ENCODE measurements at regions of chr16 and their contacts with region 1.

Region 1: GRCh38 chr16:53822936-53823529 is 119.1 kb downstream of the FTO start:
- DNase-seq: no peak
- H3K4me3 ChIP-seq: no peak overlapping the region
- H3K27ac ChIP-seq: peak overlapping the region; percentile 55
- H3K4me1 ChIP-seq: peaks cover 27% of the 10 kb centered on the region
- H3K27me3 ChIP-seq: no peaks in the 10 kb centered on the region
- CTCF ChIP-seq: no peak

Region 2: GRCh38 chr16:53374800-53375199 is 448.2 kb before region 1 on chr16:
- CTCF ChIA-PET with region 1: no interaction called
- POLR2A ChIA-PET with region 1: no interaction called
- intact Hi-C with region 1: no loop called
- DNase-seq: no peak
- H3K4me3 ChIP-seq: peak overlapping the region; percentile 69; the same call in 1 of the 2 replicates
- H3K27ac ChIP-seq: no peak overlapping the region
- H3K4me1 ChIP-seq: peaks cover 17% of the 10 kb centered on the region
- H3K27me3 ChIP-seq: 0 out of 2 replicates have a peak, but pooled peaks cover 4% of the 10 kb centered on the region
- CTCF ChIP-seq: no peak

Region 3: DNA sequence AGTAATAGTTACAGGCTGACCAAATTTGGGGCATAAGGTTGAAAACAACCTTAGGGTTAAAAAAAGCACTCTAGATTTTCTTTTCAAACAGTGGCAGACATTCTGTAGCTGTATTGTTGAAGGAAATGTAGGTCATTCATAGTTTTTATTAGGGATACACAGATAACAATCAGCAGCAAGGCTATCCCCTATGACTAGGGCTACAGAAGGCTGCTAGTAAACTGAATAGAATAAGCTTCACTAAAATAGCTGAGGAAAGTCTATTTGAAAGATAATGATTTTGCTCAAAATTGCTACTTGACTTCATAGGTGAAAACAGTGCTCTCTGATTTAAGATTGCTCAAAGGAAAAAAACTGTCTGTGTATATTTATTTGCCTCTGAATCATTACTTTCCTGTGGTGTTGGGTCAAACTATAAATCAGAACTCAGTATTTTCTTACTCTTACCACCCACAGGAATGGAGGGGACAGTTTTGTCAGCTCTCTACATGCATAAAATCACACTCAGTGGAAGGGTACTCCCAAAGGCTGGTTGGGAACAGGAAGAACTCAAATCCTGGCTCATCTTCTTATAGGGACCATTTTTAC is 144.2 kb before region 1 on chr16:
- CTCF ChIA-PET with region 1: no interaction called
- POLR2A ChIA-PET with region 1: no interaction called
- intact Hi-C with region 1: no loop called
- DNase-seq: no peak
- H3K4me3 ChIP-seq: no peak overlapping the region
- H3K27ac ChIP-seq: no peak overlapping the region
- H3K4me1 ChIP-seq: no peaks in the 10 kb centered on the region
- H3K27me3 ChIP-seq: no peaks in the 10 kb centered on the region
- CTCF ChIP-seq: no peak

Region 4: DNA sequence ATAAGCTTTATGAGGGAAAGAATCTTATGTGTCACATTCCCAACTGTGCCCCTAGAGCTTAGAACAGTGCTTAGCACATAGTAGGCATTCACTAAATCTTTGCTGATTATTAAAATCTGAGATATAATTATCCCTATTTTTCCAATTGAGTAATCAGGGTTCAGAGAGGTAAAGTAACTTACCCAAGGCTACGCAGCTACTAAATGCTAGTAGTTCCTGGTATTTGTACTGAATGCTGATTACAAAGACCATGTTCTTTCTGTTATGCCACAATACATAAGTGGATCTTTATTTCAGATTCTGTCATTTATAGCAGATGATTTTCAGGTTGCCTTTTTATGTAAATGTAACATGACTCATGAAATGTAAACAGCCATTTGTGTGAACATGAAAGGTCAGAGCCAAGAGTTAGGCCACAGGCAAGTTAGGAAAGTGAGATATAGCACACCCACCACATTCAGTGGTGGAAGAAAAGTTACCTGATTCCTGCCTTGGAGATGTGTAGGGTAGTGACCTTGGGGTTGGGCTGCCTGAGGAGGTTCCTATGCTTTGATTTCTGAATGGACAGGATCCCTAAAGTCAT is 41.9 kb before region 1 on chr16:
- CTCF ChIA-PET with region 1: no interaction called
- POLR2A ChIA-PET with region 1: interaction called, 4 read pairs
- intact Hi-C with region 1: loop called (anchors 2 kb)
- DNase-seq: peak; percentile 22 to 85
- H3K4me3 ChIP-seq: no peak overlapping the region
- H3K27ac ChIP-seq: peak overlapping the region; percentile 62
- H3K4me1 ChIP-seq: peaks cover 88% of the 10 kb centered on the region
- H3K27me3 ChIP-seq: no peaks in the 10 kb centered on the region
- CTCF ChIP-seq: no peak

Region 5: DNA sequence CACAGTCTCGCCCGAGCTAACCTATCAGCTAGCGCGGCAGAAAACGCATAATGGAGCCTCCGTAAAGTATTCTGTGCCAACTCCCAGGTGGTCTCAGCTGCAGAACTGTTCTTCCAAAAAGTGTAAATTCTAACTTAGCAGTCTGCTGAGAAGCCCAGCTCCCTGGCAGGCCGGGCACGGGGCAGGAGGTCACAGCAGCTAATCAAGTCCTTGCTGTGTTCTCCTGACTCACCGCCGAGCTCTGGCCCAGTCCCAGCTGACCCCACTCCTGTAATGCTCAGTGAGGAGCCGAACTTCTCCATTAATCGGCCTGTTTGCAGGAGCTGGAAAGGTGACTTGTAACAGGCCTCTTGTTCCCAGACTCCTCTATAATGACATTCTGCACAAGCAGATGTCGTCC is 270.2 kb after region 1 on chr16:
- CTCF ChIA-PET with region 1: no interaction called
- POLR2A ChIA-PET with region 1: no interaction called
- intact Hi-C with region 1: no loop called
- DNase-seq: no peak
- H3K4me3 ChIP-seq: no peak overlapping the region
- H3K27ac ChIP-seq: no peak overlapping the region
- H3K4me1 ChIP-seq: no peaks in the 10 kb centered on the region
- H3K27me3 ChIP-seq: no peaks in the 10 kb centered on the region
- CTCF ChIP-seq: no peak